OCI-LY7 (cell line): ENCODE measurements at regions of chr14 and their contacts with region 1.

Region 1: DNA sequence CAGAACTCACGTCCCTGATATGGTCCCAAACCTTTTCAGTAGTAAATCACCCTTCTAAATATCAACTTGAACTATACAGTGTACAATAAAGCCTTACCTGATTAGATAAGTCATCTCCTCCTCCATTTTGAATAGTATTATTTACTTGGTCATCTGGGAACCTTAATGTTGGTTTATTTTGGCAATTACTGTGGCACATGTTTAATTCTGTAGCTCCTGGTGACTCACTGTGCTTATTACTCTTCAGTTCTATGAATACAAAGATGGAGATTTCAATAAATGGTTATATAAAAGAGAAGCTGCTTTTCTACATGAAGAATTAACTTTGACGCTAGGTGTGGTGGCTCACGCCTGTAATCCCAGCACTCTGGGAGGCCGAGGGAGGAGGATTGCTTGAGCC is 25.4 kb downstream of the MIS18BP1 start:
- DNase-seq: no peak
- H3K4me3 ChIP-seq: no peak overlapping the region
- H3K27ac ChIP-seq: no peak overlapping the region
- H3K4me1 ChIP-seq: no peaks in the 10 kb centered on the region
- CTCF ChIP-seq: no peak

Region 2: DNA sequence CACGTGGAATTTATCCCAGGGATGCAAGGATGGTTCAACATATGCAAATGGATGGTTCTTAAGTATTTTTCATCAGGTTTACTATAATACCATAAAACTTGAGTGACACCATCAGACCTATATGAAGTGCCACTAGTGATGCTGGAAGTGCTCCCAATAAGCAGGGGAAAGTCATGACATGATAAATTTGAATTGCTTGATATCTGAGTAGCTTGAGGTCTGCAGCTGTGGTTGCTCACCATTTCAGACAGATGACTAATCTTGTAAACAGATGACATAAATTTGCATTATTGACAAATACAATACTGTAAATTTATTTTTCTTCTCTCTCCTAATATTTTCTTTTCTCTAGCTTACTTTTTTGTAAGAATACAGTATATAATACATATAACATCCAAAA is 157.4 kb before region 1 on chr14:
- CTCF ChIA-PET with region 1: no interaction called
- POLR2A ChIA-PET with region 1: no interaction called
- intact Hi-C with region 1: no loop called
- DNase-seq: no peak
- H3K4me3 ChIP-seq: no peak overlapping the region
- H3K27ac ChIP-seq: no peak overlapping the region
- H3K4me1 ChIP-seq: no peaks in the 10 kb centered on the region
- CTCF ChIP-seq: no peak

Region 3: DNA sequence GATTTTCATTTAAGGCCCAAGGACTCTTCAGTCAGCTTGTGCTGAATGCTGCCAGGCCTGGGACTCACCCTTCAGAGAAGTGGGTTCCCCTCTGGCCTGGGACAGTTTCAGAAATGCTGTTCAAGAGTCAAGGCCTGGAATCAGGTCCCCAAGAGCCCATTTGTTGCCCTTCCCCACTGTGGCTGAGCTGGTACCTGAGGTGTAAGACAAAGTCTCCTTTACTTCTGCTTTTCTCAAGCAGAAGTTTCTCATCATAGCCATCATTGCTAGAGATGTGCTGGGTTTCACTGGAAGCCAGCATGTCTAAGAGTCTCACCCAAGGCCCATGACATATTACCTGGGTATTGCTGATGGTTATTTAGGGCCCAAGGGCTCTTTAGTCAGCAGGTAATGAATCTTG is 82.9 kb before region 1 on chr14:
- CTCF ChIA-PET with region 1: no interaction called
- POLR2A ChIA-PET with region 1: no interaction called
- intact Hi-C with region 1: no loop called
- DNase-seq: no peak
- H3K4me3 ChIP-seq: no peak overlapping the region
- H3K27ac ChIP-seq: no peak overlapping the region
- H3K4me1 ChIP-seq: peaks cover 16% of the 10 kb centered on the region
- CTCF ChIP-seq: no peak

Region 4: DNA sequence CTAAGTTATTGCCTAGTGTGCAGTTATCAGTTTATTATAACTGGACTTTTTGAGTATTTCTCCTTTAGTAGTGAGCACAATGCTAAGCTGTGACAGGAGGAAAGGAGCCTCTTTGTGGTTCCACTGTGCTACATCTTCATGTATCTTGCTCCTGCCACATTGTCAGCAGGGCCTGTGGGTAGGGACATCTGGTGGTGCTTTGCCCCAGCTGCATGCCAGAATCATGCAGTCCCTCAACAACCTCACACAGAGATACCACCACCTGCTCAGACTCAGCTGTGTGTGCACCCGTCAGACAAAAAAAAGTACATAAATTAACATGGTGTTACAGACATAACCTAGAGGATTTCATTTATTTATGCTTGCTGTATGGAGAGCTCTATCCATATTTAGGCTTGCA is 25.7 kb before region 1 on chr14:
- CTCF ChIA-PET with region 1: no interaction called
- POLR2A ChIA-PET with region 1: interaction called, 10 read pairs
- intact Hi-C with region 1: no loop called
- DNase-seq: peak; percentile 55
- H3K4me3 ChIP-seq: no peak overlapping the region
- H3K27ac ChIP-seq: no peak overlapping the region
- H3K4me1 ChIP-seq: no peaks in the 10 kb centered on the region
- CTCF ChIP-seq: peak; percentile 62